ENCODE measurements at regions of chr16 and their contacts with region 1.

Region 1: DNA sequence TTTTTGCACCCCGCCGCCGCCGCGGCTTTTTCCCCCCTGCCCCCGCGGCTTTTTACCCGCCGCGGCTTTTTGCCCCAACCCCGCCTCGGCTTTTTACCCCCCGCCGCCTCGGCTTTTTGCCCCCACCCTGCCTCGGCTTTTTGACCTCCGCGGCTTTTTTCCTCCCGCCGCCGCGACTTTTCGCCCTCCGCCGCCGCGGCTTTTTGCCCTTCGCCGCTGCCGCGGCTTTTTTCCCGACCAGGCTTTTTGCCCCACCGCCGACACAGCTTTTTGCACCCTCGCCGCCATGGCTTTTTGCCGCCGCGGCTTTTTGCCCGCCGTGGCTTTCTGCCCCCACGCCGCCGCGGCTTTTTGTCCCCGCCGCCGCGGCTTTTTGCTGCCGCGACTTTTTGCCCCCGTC is 137.0 kb upstream of the TP53TG3D start:
- DNase-seq: peak; percentile 0 to 12 (median 0)
- ATAC-seq: no peak
- H3K4me3 ChIP-seq: peak overlapping the region; percentile 37
- H3K27ac ChIP-seq: no peak overlapping the region
- H3K4me1 ChIP-seq: no peaks in the 10 kb centered on the region
- H3K27me3 ChIP-seq: no peaks in the 10 kb centered on the region
- CTCF ChIP-seq: no peak
- EP300 ChIP-seq: no peak
- POLR2A ChIP-seq: no peak
- RAD21 ChIP-seq: no peak

Region 2: GRCh38 chr16:30977502-30977901 is 1138.6 kb before region 1 on chr16:
- CTCF ChIA-PET with region 1: no interaction called
- POLR2A ChIA-PET with region 1: no interaction called
- in situ Hi-C with region 1: no loop called
- intact Hi-C with region 1: no loop called
- DNase-seq: peak; percentile 48 to 64 (median 58)
- ATAC-seq: peak; percentile 68
- H3K4me3 ChIP-seq: no peak overlapping the region
- H3K27ac ChIP-seq: no peak overlapping the region
- H3K4me1 ChIP-seq: peaks cover 8 to 36% of the 10 kb centered on the region in 2 experiments; a peak in 4 of 5 replicates
- H3K27me3 ChIP-seq: no peaks in the 10 kb centered on the region
- CTCF ChIP-seq: peak; percentile 61 to 74 (median 64)
- EP300 ChIP-seq: no peak
- POLR2A ChIP-seq: no peak; the same call in 1 of the 2 replicates
- RAD21 ChIP-seq: peak in 1 of 2 experiments; percentile 42; a peak in 2 of 4 replicates

Region 3: DNA sequence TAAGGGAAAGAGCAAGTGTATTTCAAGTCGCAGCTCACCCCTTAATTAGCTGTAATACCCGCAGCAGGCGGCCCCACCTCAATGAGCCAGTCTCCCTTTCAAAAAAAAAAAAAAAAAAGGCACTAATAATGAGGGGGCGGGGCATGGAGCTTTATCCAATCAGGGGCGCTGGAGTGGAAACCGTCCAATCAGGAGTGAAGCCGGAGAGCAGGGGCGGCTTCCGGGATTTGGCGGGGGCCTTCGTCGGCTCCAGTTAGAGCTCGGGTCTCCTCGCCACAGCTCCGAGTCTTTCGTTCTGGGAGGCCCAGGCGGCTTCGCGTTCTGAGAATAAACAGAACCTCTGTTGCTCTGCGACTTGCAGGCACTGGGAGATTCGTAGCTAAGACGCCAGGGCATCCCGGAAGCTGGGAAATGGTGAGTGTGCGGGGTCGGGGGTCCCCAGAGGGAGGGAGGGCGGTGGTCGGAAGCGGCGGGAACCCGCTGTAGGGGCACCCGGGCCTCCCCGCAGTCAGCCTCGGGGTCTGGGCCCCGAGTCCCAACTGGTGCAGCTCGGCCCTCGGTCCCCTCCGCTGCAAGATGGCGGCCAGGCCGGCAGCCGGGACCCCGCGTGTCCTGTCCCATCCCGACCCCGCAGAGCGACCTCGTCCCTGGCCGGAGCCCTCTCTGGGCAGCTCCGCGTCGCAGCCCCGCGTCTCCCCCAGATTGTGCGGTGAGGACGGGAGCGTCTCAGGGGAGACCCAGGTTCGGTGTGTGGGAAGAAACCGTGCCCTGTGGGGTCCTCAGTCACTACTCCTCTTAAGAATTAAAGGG is 242.3 kb before region 1 on chr16 and contains the start of gene ZNF267:
- CTCF ChIA-PET with region 1: no interaction called
- POLR2A ChIA-PET with region 1: no interaction called
- in situ Hi-C with region 1: no loop called
- intact Hi-C with region 1: no loop called
- DNase-seq: peak; percentile 95 to 98 (median 98)
- ATAC-seq: peak; percentile 93
- H3K4me3 ChIP-seq: peak within 1 kb of the TSS; percentile 98
- H3K27ac ChIP-seq: peak within 1 kb of the TSS; percentile 98
- H3K4me1 ChIP-seq: peaks cover 10 to 37% of the 10 kb centered on the region in 2 experiments
- H3K27me3 ChIP-seq: no peaks in the 10 kb centered on the region
- CTCF ChIP-seq: no peak
- EP300 ChIP-seq: no peak
- POLR2A ChIP-seq: peak; percentile 96
- RAD21 ChIP-seq: no peak
- polyA plus RNA-seq, gene ZNF267: 18.1 to 22.2 TPM

Region 4: GRCh38 chr16:33059206-33059605 is 943.1 kb after region 1 on chr16:
- CTCF ChIA-PET with region 1: no interaction called
- POLR2A ChIA-PET with region 1: no interaction called
- in situ Hi-C with region 1: loop called (anchors 25 kb)
- intact Hi-C with region 1: no loop called
- DNase-seq: no peak
- ATAC-seq: no peak
- H3K4me3 ChIP-seq: no peak overlapping the region
- H3K27ac ChIP-seq: no peak overlapping the region
- H3K4me1 ChIP-seq: no peaks in the 10 kb centered on the region
- H3K27me3 ChIP-seq: no peaks in the 10 kb centered on the region
- CTCF ChIP-seq: no peak
- EP300 ChIP-seq: no peak
- POLR2A ChIP-seq: no peak
- RAD21 ChIP-seq: no peak

Measured in K562 (cell line).